PC-3 (cell line): ENCODE measurements at regions of chrX and their contacts with region 1.

Region 1: GRCh38 chrX:19593690-19594089 is 78.4 kb upstream of the MAP3K15 start:
- DNase-seq: peak; percentile 56
- ATAC-seq: no peak
- H3K4me3 ChIP-seq: no peak overlapping the region
- H3K27ac ChIP-seq: no peak overlapping the region
- H3K4me1 ChIP-seq: no peaks in the 10 kb centered on the region
- H3K27me3 ChIP-seq: no peaks in the 10 kb centered on the region
- CTCF ChIP-seq: peak; percentile 72

Region 2: DNA sequence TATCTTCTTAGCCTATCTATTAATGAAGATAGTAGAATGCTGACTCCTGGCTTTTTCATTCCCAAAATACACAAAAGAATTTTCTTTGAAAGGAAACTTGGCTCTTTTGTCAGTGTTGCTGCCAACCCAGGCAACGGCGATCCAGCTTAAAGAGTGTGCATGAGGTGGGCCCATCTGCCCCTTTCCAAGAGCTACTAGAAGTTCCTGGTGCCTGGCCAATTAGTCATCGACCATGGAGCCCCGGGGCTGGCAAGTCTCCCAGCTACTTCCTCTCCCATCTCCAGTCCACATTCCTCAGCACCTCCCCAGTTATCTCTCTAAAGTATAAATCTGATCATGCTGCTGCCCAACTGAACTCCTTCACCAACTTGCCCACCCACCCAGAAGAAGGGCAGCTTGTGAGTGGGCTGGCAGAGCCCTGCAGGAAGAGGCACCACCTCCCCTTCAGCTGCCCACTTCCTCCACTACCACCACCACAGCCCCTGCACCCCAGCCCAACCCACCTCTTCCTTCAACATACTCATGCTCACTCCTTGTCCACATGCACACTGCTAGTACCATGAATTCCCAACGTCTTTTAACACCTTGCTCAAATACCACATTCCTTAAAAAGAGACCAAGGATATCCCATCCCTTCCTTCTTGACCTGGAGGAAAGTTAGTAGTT is 79.8 kb after region 1 on chrX:
- CTCF ChIA-PET with region 1: no interaction called
- POLR2A ChIA-PET with region 1: no interaction called
- intact Hi-C with region 1: loop called (anchors 5 kb)
- DNase-seq: peak; percentile 95
- ATAC-seq: peak; percentile 50
- H3K4me3 ChIP-seq: 0 out of 2 replicates have a peak overlapping the region, but pooled peaks have one; percentile 27
- H3K27ac ChIP-seq: peak overlapping the region; percentile 94
- H3K4me1 ChIP-seq: peaks cover 67% of the 10 kb centered on the region
- H3K27me3 ChIP-seq: no peaks in the 10 kb centered on the region
- CTCF ChIP-seq: no peak

Region 3: DNA sequence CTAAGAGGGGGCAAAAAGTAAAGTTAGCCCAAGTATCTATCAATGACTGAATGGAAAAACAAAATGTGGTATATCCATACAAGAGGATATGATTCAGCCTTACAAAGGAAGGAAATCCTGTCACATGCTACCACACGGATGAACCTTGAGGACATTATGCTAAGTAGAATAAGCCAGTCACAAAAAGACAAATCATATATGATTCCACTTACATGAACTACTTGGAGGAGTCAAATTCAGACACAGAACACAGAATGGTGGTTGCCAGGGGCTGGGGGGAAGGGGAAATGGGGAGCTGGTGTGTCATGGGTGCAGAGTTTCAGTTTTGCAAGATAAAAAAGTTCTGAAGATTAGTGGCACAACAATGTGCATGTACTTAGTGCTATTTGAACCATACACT is 192.0 kb after region 1 on chrX:
- CTCF ChIA-PET with region 1: no interaction called
- POLR2A ChIA-PET with region 1: no interaction called
- intact Hi-C with region 1: no loop called
- DNase-seq: no peak
- ATAC-seq: no peak
- H3K4me3 ChIP-seq: no peak overlapping the region
- H3K27ac ChIP-seq: no peak overlapping the region
- H3K4me1 ChIP-seq: peaks cover 7% of the 10 kb centered on the region
- H3K27me3 ChIP-seq: no peaks in the 10 kb centered on the region
- CTCF ChIP-seq: no peak

Region 4: DNA sequence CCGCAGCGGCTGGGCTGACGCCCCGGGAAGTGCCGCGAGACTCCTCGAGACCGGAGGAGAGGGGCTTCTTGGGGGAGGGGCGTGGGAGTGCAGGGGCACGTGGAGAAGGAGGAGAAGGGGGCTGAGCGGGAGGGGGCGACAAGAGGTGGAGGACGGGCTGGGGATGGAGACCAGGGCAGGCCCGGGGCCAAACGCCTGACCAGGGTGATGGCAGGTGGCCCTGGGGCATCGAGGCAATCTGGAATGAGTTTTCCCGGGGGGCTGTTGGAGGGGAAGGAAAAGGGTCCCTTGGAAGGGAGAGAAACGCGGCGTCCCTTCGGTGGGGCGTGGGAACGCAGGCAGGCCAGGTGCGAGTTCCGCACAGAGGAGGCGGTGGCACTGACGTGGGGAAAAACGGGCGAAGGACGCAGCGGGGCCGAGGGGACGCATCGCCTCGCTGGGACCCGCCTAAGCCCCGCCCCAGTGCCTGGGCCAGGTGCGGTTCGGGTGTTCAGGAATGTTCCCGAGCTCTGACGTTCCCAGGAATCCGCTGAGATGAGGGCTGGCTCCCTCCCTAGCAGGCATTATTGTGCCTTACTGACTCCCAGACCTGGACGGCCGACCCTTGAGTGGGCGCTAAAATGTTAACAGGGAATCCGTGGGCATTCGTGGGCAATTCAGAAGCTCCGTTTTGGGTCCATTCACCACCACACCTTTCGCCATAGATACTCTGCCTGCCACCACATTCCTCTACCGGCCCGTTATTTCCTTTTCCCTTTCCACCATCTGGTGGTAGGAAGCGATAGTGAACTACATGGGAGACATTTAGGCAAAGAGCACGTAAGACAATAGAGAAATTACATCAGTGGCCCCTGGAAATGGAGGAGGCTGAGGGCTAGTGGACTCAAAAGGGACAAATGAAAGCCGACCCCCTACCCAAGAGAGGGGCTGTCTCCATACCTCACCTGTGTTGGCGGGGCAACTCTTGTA is 294.5 kb after region 1 on chrX:
- CTCF ChIA-PET with region 1: interaction called, 9 read pairs
- POLR2A ChIA-PET with region 1: no interaction called
- intact Hi-C with region 1: loop called (anchors 1 kb)
- DNase-seq: peak; percentile 80
- ATAC-seq: peak; percentile 79
- H3K4me3 ChIP-seq: peak overlapping the region; percentile 73
- H3K27ac ChIP-seq: peak overlapping the region; percentile 77
- H3K4me1 ChIP-seq: peaks cover 30% of the 10 kb centered on the region
- H3K27me3 ChIP-seq: no peaks in the 10 kb centered on the region
- CTCF ChIP-seq: peak; percentile 75

Region 5: GRCh38 chrX:19972984-19973383 is 379.3 kb after region 1 on chrX:
- CTCF ChIA-PET with region 1: no interaction called
- POLR2A ChIA-PET with region 1: no interaction called
- intact Hi-C with region 1: no loop called
- DNase-seq: no peak
- ATAC-seq: no peak
- H3K4me3 ChIP-seq: no peak overlapping the region
- H3K27ac ChIP-seq: no peak overlapping the region
- H3K4me1 ChIP-seq: no peaks in the 10 kb centered on the region
- H3K27me3 ChIP-seq: no peaks in the 10 kb centered on the region
- CTCF ChIP-seq: no peak